ENCODE measurements at regions of chr12 and their contacts with region 1.

Region 1: DNA sequence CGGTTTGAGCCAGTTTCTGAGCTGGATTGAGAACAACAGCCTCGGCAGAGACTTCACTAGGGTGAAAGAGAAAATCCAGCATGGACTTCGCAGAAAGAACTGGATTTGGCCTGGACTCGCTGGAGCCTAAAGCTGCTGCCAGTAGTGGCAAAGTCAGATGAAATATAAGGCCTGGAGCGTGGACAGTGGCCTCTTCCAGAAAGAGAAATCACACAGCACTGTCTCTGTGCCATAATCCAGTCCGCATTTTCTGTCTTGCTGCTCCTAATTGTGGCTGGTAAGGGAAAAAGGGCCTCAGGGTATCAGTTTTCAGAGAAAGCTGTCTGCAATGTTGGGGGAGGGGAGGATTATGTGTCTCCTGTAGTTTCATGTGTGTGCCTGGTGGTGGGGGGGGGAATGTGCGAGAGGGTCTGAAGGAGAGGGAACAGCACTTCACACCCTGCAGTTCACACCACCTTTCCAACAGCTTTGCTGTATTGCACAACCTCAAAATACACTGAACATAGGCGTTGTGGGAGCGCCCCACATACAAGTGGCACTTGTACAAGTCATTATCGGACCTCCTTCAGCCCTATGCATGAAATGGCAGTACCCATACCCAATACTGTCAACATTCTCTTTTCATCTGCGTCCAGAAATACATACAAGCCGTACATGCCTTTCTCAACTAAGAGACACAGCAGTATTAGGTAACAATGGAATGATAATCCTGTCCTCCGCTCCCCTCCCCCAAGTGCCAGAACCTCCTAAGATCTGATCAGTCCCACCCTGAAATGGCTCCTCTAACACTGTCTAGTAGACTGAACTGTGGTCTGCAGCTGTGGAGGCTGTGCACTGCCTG is 107.5 kb upstream of the ATF7IP start:
- DNase-seq: peak; percentile 81
- H3K4me3 ChIP-seq: peak overlapping the region in 2 of 4 donors; percentile 12 to 46
- H3K27ac ChIP-seq: peak overlapping the region; percentile 86 to 96 (median 89)
- H3K4me1 ChIP-seq: peaks cover 31 to 75% (median 37%) of the 10 kb centered on the region in 3 donors
- H3K27me3 ChIP-seq: no peaks in the 10 kb centered on the region
- CTCF ChIP-seq: peak in 4 of 6 experiments; percentile 8 to 27 (median 16)
- POLR2A ChIP-seq: peak in 2 of 4 donors; percentile 9 to 52

Region 2: GRCh38 chr12:14327711-14328381 is 69.9 kb after region 1 on chr12:
- intact Hi-C with region 1: no loop called
- DNase-seq: no peak
- H3K4me3 ChIP-seq: no peak overlapping the region
- H3K27ac ChIP-seq: peak overlapping the region; percentile 25 to 60 (median 44)
- H3K4me1 ChIP-seq: peaks cover 0 to 10% (median 3%) of the 10 kb centered on the region in 3 donors
- H3K27me3 ChIP-seq: no peaks in the 10 kb centered on the region
- CTCF ChIP-seq: no peak
- POLR2A ChIP-seq: no peak

Region 3: DNA sequence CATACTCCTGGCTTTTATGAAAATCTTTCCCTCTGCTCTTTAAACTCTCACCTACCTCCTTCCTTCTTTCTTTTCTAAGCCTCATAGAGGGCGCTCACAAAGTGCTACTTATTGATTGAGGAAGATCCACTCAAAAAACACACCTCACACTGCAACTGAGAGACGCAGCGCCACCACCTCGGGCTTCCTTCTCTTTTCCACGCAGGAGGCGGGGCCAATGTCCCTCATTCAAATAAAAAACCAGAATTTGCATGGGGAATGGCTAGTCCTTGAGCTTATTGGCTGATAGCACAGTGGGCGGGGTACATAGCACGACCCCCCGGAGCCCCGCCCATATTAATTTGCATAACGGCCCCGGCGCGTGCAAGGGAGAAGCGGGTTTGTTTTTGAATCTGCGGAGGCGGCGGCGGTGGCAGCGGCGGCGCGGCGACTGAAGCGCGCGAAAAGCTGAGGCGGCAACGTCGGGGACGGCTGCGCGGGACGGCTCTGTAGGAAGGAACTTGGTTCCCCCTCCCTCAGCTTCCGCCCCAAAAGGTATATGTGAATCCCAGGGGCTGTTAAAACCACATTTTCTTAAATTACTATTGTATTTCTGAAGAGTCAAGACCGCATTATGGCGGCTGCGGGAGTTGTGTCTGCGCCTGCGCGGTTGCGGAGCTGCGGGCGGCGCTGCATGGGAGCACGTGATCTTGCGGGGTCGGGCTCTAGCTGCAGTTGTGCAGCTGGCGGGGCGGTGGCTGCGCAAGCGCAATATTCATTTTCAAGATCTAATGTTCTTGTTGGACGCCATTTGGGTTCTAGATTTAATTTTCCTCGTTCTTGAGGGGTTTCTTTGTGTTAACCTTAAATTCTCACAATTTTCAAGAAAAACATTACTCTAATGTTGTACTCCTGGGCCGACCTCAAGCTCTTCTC is 107.6 kb after region 1 on chr12 and contains the start of gene ATF7IP:
- intact Hi-C with region 1: loop called (anchors 5 kb)
- DNase-seq: peak; percentile 93
- H3K4me3 ChIP-seq: peak within 1 kb of the TSS; percentile 52 to 86 (median 72)
- H3K27ac ChIP-seq: peak within 1 kb of the TSS; percentile 89 to 98 (median 97)
- H3K4me1 ChIP-seq: peaks cover 0 to 24% (median 9%) of the 10 kb centered on the region in 3 donors
- H3K27me3 ChIP-seq: no peaks in the 10 kb centered on the region
- CTCF ChIP-seq: peak in 5 of 6 experiments; percentile 15 to 43 (median 28)
- POLR2A ChIP-seq: peak in 3 of 4 donors; percentile 19 to 89 (median 80)
- total RNA-seq, gene ATF7IP: 29.2 to 38.7 (median 34.8) TPM

Region 4: GRCh38 chr12:14384783-14385638 is 127.1 kb after region 1 on chr12:
- intact Hi-C with region 1: no loop called
- DNase-seq: no peak
- H3K4me3 ChIP-seq: peak overlapping the region; percentile 1 to 49 (median 10)
- H3K27ac ChIP-seq: peak overlapping the region; percentile 33 to 78 (median 63)
- H3K4me1 ChIP-seq: peaks cover 0 to 61% (median 20%) of the 10 kb centered on the region in 3 donors
- H3K27me3 ChIP-seq: no peaks in the 10 kb centered on the region
- CTCF ChIP-seq: no peak
- POLR2A ChIP-seq: peak in 1 of 4 donors; percentile 43

Measured in esophagus squamous epithelium (tissue), 5 donors.